Heart left ventricle (tissue), 16 donors: ENCODE measurements at regions of chr20 and their contacts with region 1.

Region 1: GRCh38 chr20:40749985-40750506 is 61.0 kb upstream of the MAFB start:
- DNase-seq: peak in 1 of 5 donors; percentile 32
- ATAC-seq: peak in 3 of 4 donors; percentile 33 to 79 (median 68)
- H3K4me3 ChIP-seq: no peak overlapping the region
- H3K27ac ChIP-seq: peak overlapping the region in 1 of 12 donors; percentile 5
- H3K4me1 ChIP-seq: peaks cover 0 to 32% (median 12%) of the 10 kb centered on the region in 12 donors
- H3K27me3 ChIP-seq: peaks cover 0 to 4% (median 0%) of the 10 kb centered on the region in 9 donors
- CTCF ChIP-seq: no peak
- POLR2A ChIP-seq: no peak

Region 2: DNA sequence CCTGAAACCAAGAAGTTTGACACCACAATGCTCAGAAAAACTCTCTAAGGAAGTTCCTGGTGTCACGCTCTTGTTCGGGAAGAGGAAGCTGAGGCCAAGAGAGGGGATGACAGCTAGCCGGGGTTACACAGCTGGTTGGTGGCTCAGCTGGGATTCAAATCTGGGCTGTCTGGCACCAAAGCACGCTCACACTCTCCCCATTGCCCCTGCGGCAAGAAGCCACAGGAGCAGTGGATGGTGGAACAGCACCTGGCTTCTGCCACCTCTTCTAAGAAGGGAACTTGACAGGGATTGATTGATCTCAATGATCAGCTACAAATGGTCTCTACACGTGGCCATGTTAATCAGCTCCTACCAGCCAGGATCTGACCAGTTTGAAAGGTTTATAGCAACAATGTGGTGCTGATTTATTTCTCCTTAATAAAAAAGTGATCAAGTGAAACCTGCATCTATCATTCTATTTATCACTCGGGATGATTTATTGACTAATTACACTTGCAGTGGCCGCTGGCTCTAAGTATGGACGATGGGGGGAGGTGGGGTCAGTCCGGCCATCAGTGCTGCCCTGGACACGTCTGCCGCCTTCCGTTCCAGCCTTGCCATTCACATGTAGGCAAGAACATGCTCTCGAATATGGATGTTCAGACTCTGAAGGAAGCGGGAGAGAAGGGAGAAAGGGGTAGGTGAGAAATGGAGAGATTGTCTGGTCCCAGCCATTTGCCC is 206.7 kb after region 1 on chr20:
- intact Hi-C with region 1: loop called in 2 of 10 experiments (anchors 5 to 10 kb)
- DNase-seq: no peak
- ATAC-seq: peak in 1 of 4 donors; percentile 47
- H3K4me3 ChIP-seq: no peak overlapping the region
- H3K27ac ChIP-seq: no peak overlapping the region
- H3K4me1 ChIP-seq: peaks cover 0 to 7% (median 0%) of the 10 kb centered on the region in 12 donors
- H3K27me3 ChIP-seq: peaks cover 0 to 4% (median 0%) of the 10 kb centered on the region in 9 donors
- CTCF ChIP-seq: no peak
- POLR2A ChIP-seq: no peak